Activated CD4-positive, alpha-beta T cell treated with anti-CD3 and anti-CD28 coated beads for 36 hours (primary cell): ENCODE measurements at regions of chr12 and their contacts with region 1.

Region 1: DNA sequence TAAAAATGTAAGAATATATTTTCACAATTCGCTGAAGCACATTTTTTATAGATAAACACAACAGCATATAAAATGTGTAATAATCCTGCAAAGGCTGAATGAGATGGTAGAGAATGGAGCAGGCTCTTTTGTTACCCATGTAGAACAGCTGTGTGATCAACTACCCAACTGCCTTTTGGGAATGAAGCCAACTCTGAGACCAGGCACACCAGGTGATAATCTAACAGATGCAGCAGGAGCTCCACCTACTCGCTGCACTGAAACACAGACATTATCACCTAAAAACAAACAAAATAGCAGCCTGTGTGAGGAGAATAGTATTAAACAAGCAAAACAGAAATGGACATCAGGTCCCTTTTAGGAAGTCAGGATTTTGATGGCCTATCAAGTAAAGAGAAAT is 183.3 kb downstream of the CCDC59 start:
- DNase-seq: no peak
- ATAC-seq: no peak
- H3K4me3 Mint-ChIP-seq: no peak overlapping the region
- H3K27ac Mint-ChIP-seq: no peak overlapping the region
- H3K4me1 Mint-ChIP-seq: no peaks in the 10 kb centered on the region
- H3K27me3 Mint-ChIP-seq: no peaks in the 10 kb centered on the region

Region 2: GRCh38 chr12:82069931-82070514 is 104.9 kb before region 1 on chr12:
- CTCF ChIA-PET with region 1: no interaction called
- POLR2A ChIA-PET with region 1: no interaction called
- intact Hi-C with region 1: no loop called
- DNase-seq: no peak
- ATAC-seq: no peak
- H3K4me3 Mint-ChIP-seq: no peak overlapping the region
- H3K27ac Mint-ChIP-seq: no peak overlapping the region
- H3K4me1 Mint-ChIP-seq: no peaks in the 10 kb centered on the region
- H3K27me3 Mint-ChIP-seq: no peaks in the 10 kb centered on the region

Region 3: DNA sequence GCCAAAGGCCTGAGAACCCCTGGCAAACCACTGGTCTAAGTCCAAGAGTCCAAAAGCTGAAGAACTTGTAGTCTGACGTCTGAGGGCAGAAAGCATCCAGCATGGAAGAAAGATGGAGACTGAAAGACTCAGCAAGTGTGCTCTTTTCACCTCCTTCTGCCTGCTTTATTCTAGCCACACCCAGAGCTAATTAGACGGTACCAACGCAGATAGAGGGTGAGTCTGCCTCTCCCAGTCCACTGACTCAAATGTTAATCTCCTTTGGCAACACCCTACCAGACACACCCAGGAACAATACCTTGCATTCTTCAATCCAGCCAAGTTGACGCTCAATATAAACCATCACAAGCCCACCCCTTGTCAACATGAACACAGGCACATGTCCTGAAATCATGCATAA is 28.1 kb after region 1 on chr12:
- CTCF ChIA-PET with region 1: no interaction called
- POLR2A ChIA-PET with region 1: no interaction called
- intact Hi-C with region 1: loop called in 1 of 2 experiments (anchors 2 kb)
- DNase-seq: no peak
- ATAC-seq: no peak
- H3K4me3 Mint-ChIP-seq: no peak overlapping the region
- H3K27ac Mint-ChIP-seq: no peak overlapping the region
- H3K4me1 Mint-ChIP-seq: no peaks in the 10 kb centered on the region
- H3K27me3 Mint-ChIP-seq: no peaks in the 10 kb centered on the region

Region 4: GRCh38 chr12:82216475-82216874 is 41.5 kb after region 1 on chr12:
- CTCF ChIA-PET with region 1: no interaction called
- POLR2A ChIA-PET with region 1: no interaction called
- intact Hi-C with region 1: no loop called
- DNase-seq: no peak
- ATAC-seq: no peak
- H3K4me3 Mint-ChIP-seq: no peak overlapping the region
- H3K27ac Mint-ChIP-seq: no peak overlapping the region
- H3K4me1 Mint-ChIP-seq: no peaks in the 10 kb centered on the region
- H3K27me3 Mint-ChIP-seq: no peaks in the 10 kb centered on the region

Region 5: GRCh38 chr12:82608706-82609105 is 433.8 kb after region 1 on chr12:
- CTCF ChIA-PET with region 1: no interaction called
- POLR2A ChIA-PET with region 1: no interaction called
- intact Hi-C with region 1: no loop called
- DNase-seq: no peak
- ATAC-seq: no peak
- H3K4me3 Mint-ChIP-seq: no peak overlapping the region
- H3K27ac Mint-ChIP-seq: no peak overlapping the region
- H3K4me1 Mint-ChIP-seq: no peaks in the 10 kb centered on the region
- H3K27me3 Mint-ChIP-seq: no peaks in the 10 kb centered on the region